ENCODE measurements at regions of chr4 and their contacts with region 1.

Region 1: DNA sequence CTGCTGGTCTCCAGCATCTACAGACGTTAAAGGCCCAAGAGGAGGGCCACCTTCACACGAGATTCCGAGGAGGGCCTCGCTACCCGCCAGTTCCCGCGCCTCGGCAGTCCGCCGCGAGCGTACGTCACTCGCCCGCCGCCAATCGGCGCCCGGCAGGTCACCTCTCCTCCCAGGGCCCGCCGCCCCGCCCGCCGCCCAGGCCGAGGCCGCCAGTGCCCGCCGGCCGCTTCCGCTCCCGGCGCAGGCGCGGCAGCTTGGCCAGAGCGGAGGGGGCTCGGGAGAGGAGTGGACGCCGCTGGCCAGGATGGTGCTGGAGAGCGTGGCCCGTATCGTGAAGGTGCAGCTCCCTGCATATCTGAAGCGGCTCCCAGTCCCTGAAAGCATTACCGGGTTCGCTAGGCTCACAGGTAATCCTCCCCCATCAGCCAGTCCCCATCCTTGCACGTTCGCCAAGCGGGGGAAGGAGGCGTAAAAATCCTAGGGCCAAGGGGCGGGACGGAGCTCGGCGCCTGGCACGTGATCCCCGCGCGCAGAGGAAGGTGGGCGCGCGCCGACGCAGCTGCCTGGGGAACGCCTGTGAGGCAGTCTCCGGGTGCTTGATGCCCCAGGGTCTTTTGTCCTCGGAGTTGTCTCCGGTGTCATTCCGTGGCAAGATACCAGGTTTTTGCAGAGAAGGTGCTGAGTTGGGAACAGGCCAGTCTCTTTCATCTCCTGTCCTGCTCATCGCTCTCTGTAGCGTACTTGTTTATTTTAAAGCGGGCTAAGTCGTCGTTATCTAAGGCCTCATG is at the start of gene CISD2:
- DNase-seq: peak; percentile 95
- ATAC-seq: peak; percentile 87
- H3K4me3 ChIP-seq: peak within 1 kb of the TSS; percentile 75 to 89 (median 84)
- H3K4me3 Mint-ChIP-seq: peak within 1 kb of the TSS; percentile 93
- H3K27ac ChIP-seq: peak within 1 kb of the TSS; percentile 97
- H3K27ac Mint-ChIP-seq: peak within 1 kb of the TSS; percentile 97
- H3K4me1 ChIP-seq: peaks cover 22 to 23% of the 10 kb centered on the region in 2 donors
- H3K4me1 Mint-ChIP-seq: peaks cover 52% of the 10 kb centered on the region
- H3K27me3 ChIP-seq: no peaks in the 10 kb centered on the region
- H3K27me3 Mint-ChIP-seq: no peaks in the 10 kb centered on the region
- CTCF ChIP-seq: no peak
- total RNA-seq, gene CISD2: 15.1 and 16.0 TPM in 2 replicates

Region 2: GRCh38 chr4:102918859-102919258 is 49.9 kb after region 1 on chr4:
- CTCF ChIA-PET with region 1: no interaction called
- POLR2A ChIA-PET with region 1: no interaction called
- intact Hi-C with region 1: no loop called
- DNase-seq: no peak
- ATAC-seq: no peak
- H3K4me3 ChIP-seq: no peak overlapping the region
- H3K4me3 Mint-ChIP-seq: no peak overlapping the region
- H3K27ac ChIP-seq: no peak overlapping the region
- H3K27ac Mint-ChIP-seq: no peak overlapping the region
- H3K4me1 ChIP-seq: no peaks in the 10 kb centered on the region
- H3K4me1 Mint-ChIP-seq: no peaks in the 10 kb centered on the region
- H3K27me3 ChIP-seq: no peaks in the 10 kb centered on the region
- H3K27me3 Mint-ChIP-seq: no peaks in the 10 kb centered on the region
- CTCF ChIP-seq: no peak

Region 3: DNA sequence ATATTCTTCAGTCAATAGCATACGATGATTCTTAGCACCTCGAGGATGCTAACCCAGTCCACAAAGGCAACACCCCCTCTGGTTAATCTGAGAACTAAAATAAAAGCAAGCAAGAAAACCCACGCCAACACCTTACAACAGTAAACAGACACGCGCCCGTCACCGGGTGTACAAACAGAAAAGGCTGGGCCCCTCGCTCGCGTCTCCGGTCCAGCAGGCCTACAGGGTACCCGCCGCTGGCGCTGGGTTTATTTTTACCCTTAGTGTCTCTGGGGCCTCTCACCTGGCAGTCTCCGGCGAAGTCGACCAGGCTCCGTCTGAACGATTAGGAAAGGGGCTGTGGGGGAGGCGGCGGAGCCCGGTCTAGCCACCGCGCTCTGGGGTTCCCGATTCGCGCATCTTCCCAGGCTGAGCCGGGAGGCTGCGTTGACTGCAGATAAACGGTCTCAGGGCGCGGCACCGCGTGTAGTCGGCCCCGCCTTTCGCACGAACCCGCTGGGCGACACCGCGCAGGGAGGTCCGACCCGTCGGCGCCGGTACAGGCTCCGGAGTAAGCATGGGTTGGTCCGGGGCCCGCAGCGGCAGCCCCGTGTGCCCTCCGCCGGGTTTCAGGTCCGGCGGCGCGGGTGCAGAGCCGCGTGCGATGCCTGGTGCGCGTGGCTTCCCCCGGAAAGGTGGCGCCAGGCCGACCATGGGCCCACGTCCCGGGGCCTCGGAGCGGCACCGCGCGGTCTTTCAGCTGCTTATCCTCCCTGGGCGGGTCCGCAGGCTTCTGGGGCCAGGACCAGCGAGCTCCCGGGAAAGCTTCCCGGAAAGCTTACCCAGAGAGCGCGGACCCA is 207.1 kb after region 1 on chr4:
- CTCF ChIA-PET with region 1: no interaction called
- POLR2A ChIA-PET with region 1: interaction called, 3 read pairs
- intact Hi-C with region 1: loop called (anchors 2 kb)
- DNase-seq: peak; percentile 78
- ATAC-seq: peak; percentile 55
- H3K4me3 ChIP-seq: peak overlapping the region; percentile 65 to 83 (median 80)
- H3K4me3 Mint-ChIP-seq: peak overlapping the region; percentile 82
- H3K27ac ChIP-seq: peak overlapping the region; percentile 92
- H3K27ac Mint-ChIP-seq: peak overlapping the region; percentile 89
- H3K4me1 ChIP-seq: peaks cover 27 to 31% of the 10 kb centered on the region in 2 donors
- H3K4me1 Mint-ChIP-seq: peaks cover 35% of the 10 kb centered on the region
- H3K27me3 ChIP-seq: no peaks in the 10 kb centered on the region
- H3K27me3 Mint-ChIP-seq: no peaks in the 10 kb centered on the region
- CTCF ChIP-seq: peak; percentile 12

Region 4: GRCh38 chr4:103198111-103198765 is 329.3 kb after region 1 on chr4 and contains the start of gene CENPE:
- CTCF ChIA-PET with region 1: no interaction called
- POLR2A ChIA-PET with region 1: no interaction called
- intact Hi-C with region 1: loop called (anchors 5 kb)
- DNase-seq: peak; percentile 94
- ATAC-seq: peak; percentile 88
- H3K4me3 ChIP-seq: peak within 1 kb of the TSS; percentile 59 to 95 (median 79)
- H3K4me3 Mint-ChIP-seq: peak within 1 kb of the TSS; percentile 94
- H3K27ac ChIP-seq: peak within 1 kb of the TSS; percentile 64 to 87
- H3K27ac Mint-ChIP-seq: peak within 1 kb of the TSS; percentile 96
- H3K4me1 ChIP-seq: peaks cover 9 to 10% of the 10 kb centered on the region in 2 donors
- H3K4me1 Mint-ChIP-seq: peaks cover 15% of the 10 kb centered on the region
- H3K27me3 ChIP-seq: peaks cover 0 to 7% (median 0%) of the 10 kb centered on the region in 4 experiments
- H3K27me3 Mint-ChIP-seq: peaks cover 12% of the 10 kb centered on the region
- CTCF ChIP-seq: no peak
- total RNA-seq, gene CENPE: 2.1 and 2.8 TPM in 2 replicates